HEK293T (cell line): ENCODE measurements at regions of chr6 and their contacts with region 1.

Region 1: DNA sequence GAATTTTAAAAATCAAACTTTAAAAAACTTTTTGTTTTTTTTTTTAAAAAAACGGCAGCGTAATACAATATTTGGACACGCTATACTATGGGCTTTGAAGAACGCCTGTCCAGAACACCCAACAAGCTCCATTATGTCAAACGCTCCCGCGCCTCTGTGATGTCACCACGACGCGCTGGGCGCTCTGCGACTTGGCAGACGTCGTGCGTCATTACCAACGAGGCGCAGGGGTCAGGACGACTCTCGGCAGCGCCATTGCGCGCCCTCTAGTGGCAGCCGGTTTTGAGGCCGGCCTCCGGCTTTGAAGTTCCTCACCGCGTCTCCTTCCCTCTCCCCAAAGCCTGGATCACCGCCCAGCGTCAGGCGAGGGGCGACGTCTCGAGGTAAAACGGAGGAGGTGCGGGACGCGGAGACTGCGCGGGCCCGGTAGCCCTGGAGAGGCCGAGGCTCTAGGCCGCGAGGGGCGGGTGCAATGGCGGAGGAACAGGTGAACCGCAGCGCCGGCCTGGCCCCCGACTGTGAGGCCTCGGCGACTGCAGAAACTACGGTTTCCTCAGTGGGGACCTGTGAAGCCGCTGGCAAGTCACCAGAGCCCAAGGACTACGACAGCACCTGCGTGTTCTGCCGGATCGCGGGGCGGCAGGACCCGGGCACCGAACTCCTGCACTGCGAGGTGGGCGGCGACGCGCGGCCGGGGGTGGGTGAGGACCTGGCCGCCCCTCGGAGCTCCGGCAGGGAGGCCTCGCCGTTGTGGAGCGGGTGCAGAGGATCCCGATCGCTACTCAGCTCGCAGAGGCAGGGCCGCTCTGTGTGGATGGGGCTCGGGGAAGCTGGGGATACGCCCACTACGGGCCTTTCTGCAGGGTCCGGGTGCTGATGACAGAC is at the start of gene HINT3:
- DNase-seq: peak; percentile 97

Region 2: GRCh38 chr6:125790358-125791150 is 166.2 kb before region 1 on chr6 and contains the start of gene NCOA7:
- CTCF ChIA-PET with region 1: interaction called, 25 read pairs
- POLR2A ChIA-PET with region 1: interaction called, 55 read pairs
- DNase-seq: peak; percentile 66

Region 3: GRCh38 chr6:125899726-125900182 is 57.0 kb before region 1 on chr6:
- CTCF ChIA-PET with region 1: interaction called, 14 read pairs
- POLR2A ChIA-PET with region 1: interaction called, 5 read pairs
- DNase-seq: no peak

Region 4: DNA sequence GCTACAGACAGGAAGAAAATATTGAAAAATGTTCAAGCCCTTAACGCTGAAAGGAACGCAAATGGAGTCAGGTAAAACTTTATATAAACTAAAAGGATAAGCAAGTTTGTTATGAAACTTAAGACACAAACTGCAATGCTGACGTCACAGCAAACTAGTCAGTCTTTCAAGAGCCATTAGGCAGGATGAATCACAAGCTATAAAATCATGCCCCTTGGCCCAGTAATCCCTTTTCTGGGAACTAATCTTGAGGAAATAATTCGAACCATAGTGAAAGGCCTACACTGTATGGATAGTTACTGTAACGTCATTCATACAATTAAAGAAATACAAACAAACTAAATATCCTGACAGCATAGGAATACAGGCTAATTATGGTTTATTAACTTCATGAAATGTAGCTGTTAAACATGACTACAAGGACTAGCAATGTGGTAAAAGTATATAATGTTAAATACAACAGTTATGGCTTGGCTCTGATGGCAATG is 42.8 kb before region 1 on chr6:
- CTCF ChIA-PET with region 1: interaction called, 19 read pairs
- POLR2A ChIA-PET with region 1: interaction called, 24 read pairs
- DNase-seq: peak; percentile 60

Region 5: GRCh38 chr6:125974214-125974866 is 17.6 kb after region 1 on chr6:
- CTCF ChIA-PET with region 1: interaction called, 11 read pairs
- POLR2A ChIA-PET with region 1: interaction called, 5 read pairs
- DNase-seq: peak; percentile 35